Panc1 (cell line): ENCODE measurements at regions of chr20 and their contacts with region 1.

Region 1: GRCh38 chr20:56358596-56359211 is at the start of gene FAM210B:
- DNase-seq: peak; percentile 33
- ATAC-seq: peak; percentile 99
- H3K4me3 ChIP-seq: peak within 1 kb of the TSS; percentile 72
- H3K27ac ChIP-seq: peak within 1 kb of the TSS; percentile 52; the same call in 1 of the 2 replicates
- H3K4me1 ChIP-seq: peaks cover 3% of the 10 kb centered on the region
- H3K27me3 ChIP-seq: peaks cover 3% of the 10 kb centered on the region
- CTCF ChIP-seq: no peak
- total RNA-seq, gene FAM210B: 10.8 TPM

Region 2: DNA sequence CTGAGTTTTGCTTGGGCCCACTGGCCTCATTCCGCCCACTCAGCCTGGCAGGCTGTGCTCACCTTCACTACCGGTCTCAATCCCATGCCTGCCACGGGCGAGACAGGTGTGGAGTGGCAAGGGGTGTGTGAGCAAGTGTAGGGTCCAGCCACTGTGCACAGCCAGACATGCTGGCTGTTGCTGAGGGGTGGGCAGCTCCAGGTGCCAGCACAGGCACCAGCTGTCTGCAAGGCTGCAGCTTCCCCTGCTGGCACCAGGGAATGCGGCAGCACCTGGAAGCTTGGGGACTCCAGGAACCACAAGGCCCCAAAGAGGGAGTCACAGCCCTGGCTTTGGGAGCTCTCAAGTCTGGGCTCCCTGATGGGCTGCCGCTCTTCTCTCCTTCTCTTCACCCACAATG is 726.1 kb before region 1 on chr20:
- CTCF ChIA-PET with region 1: interaction called, 10 read pairs
- POLR2A ChIA-PET with region 1: no interaction called
- in situ Hi-C with region 1: no loop called
- intact Hi-C with region 1: no loop called
- DNase-seq: no peak
- ATAC-seq: no peak
- H3K4me3 ChIP-seq: no peak overlapping the region
- H3K27ac ChIP-seq: no peak overlapping the region
- H3K4me1 ChIP-seq: no peaks in the 10 kb centered on the region
- H3K27me3 ChIP-seq: no peaks in the 10 kb centered on the region
- CTCF ChIP-seq: no peak

Region 3: DNA sequence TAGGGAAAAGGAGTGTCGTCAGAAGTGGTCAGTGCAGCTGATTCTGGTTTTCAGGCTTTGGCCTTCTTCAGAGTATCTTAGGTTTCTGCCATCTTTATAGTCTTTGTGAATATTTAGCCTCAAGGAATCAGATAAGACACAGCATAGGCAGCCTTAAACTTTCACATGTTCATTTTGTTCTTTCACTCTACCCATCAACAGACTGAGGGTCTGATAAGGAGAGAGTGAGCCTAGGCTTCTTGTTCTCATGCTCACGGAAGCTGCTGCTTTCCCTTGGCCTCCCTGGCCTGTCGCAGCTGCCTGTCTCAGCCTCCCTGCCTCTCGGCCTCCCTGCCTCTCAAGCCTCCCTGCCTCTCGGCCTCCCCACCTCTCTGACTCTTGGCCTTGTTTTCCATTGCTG is 129.9 kb after region 1 on chr20:
- CTCF ChIA-PET with region 1: no interaction called
- POLR2A ChIA-PET with region 1: interaction called, 14 read pairs
- in situ Hi-C with region 1: no loop called
- intact Hi-C with region 1: no loop called
- DNase-seq: no peak
- ATAC-seq: no peak
- H3K4me3 ChIP-seq: no peak overlapping the region
- H3K27ac ChIP-seq: no peak overlapping the region
- H3K4me1 ChIP-seq: no peaks in the 10 kb centered on the region
- H3K27me3 ChIP-seq: no peaks in the 10 kb centered on the region
- CTCF ChIP-seq: no peak

Region 4: GRCh38 chr20:56513161-56514150 is 154.8 kb after region 1 on chr20:
- CTCF ChIA-PET with region 1: no interaction called
- POLR2A ChIA-PET with region 1: no interaction called
- in situ Hi-C with region 1: no loop called
- intact Hi-C with region 1: no loop called
- DNase-seq: no peak
- ATAC-seq: no peak
- H3K4me3 ChIP-seq: no peak overlapping the region
- H3K27ac ChIP-seq: no peak overlapping the region
- H3K4me1 ChIP-seq: no peaks in the 10 kb centered on the region
- H3K27me3 ChIP-seq: no peaks in the 10 kb centered on the region
- CTCF ChIP-seq: no peak